ENCODE measurements at regions of chr12 and their contacts with region 1.

Region 1: GRCh38 chr12:105420659-105421240 is 90.3 kb downstream of the C12orf75 start:
- DNase-seq: peak; percentile 62 to 79
- ATAC-seq: peak; percentile 76 to 88
- H3K4me3 ChIP-seq: no peak overlapping the region
- H3K27ac ChIP-seq: peak overlapping the region in 1 of 2 experiments; percentile 63; a peak in 3 of 6 replicates
- H3K4me1 ChIP-seq: peaks cover 12% of the 10 kb centered on the region; the same call in 1 of the 3 replicates
- CTCF ChIP-seq: peak; percentile 97
- EP300 ChIP-seq: no peak
- POLR2A ChIP-seq: no peak
- RAD21 ChIP-seq: peak; percentile 99 to 100

Region 2: GRCh38 chr12:105431537-105432100 is 10.9 kb after region 1 on chr12:
- CTCF ChIA-PET with region 1: interaction called, 36 read pairs
- POLR2A ChIA-PET with region 1: no interaction called
- DNase-seq: no peak
- ATAC-seq: no peak
- H3K4me3 ChIP-seq: no peak overlapping the region
- H3K27ac ChIP-seq: no peak overlapping the region
- H3K4me1 ChIP-seq: 0 out of 3 replicates have a peak, but pooled peaks cover 2% of the 10 kb centered on the region
- CTCF ChIP-seq: no peak
- EP300 ChIP-seq: no peak
- POLR2A ChIP-seq: no peak
- RAD21 ChIP-seq: no peak

Region 3: GRCh38 chr12:105510526-105510925 is 89.8 kb after region 1 on chr12:
- CTCF ChIA-PET with region 1: no interaction called
- POLR2A ChIA-PET with region 1: no interaction called
- DNase-seq: no peak
- ATAC-seq: no peak
- H3K4me3 ChIP-seq: no peak overlapping the region
- H3K27ac ChIP-seq: no peak overlapping the region
- H3K4me1 ChIP-seq: 0 out of 3 replicates have a peak, but pooled peaks cover 4% of the 10 kb centered on the region
- CTCF ChIP-seq: no peak
- EP300 ChIP-seq: no peak
- POLR2A ChIP-seq: no peak
- RAD21 ChIP-seq: no peak

Region 4: DNA sequence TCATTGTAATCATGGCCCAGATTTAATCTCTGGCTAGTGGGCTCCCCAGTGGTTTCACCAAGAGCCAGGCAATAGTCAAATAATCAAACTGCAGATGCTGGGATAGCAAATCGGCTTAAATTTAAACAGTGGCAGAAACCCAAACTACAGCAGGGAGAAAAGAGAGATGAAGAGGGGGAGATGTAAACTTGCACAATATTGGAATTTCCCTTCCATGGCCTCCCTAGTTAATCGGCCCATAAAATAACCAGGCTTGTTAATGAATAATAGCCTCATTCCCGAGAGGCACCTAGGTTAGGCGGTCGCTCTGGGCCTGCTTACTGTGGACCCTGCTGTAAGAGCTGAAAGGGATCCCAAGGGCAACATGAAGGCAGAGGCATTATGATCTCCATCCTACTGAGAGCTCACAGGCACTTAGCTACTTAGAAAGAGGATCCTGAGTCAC is 601.8 kb after region 1 on chr12:
- CTCF ChIA-PET with region 1: interaction called, 15 read pairs
- POLR2A ChIA-PET with region 1: no interaction called
- DNase-seq: peak; percentile 26 to 62
- ATAC-seq: peak; percentile 67 to 85
- H3K4me3 ChIP-seq: no peak overlapping the region
- H3K27ac ChIP-seq: peak overlapping the region; percentile 65 to 73
- H3K4me1 ChIP-seq: peaks cover 26% of the 10 kb centered on the region
- CTCF ChIP-seq: no peak
- EP300 ChIP-seq: no peak
- POLR2A ChIP-seq: no peak
- RAD21 ChIP-seq: peak in 1 of 2 experiments; percentile 26; a peak in 1 of 5 replicates

Region 5: GRCh38 chr12:106149096-106149784 is 728.5 kb after region 1 on chr12:
- CTCF ChIA-PET with region 1: interaction called, 75 read pairs
- POLR2A ChIA-PET with region 1: no interaction called
- DNase-seq: peak; percentile 45 to 58
- ATAC-seq: peak; percentile 81 to 87; a peak in 4 of 6 replicates
- H3K4me3 ChIP-seq: no peak overlapping the region
- H3K27ac ChIP-seq: no peak overlapping the region
- H3K4me1 ChIP-seq: peaks cover 13% of the 10 kb centered on the region; the same call in 1 of the 3 replicates
- CTCF ChIP-seq: peak; percentile 83
- EP300 ChIP-seq: no peak
- POLR2A ChIP-seq: no peak
- RAD21 ChIP-seq: peak; percentile 75 to 77

Region 6: GRCh38 chr12:106154751-106155273 is 734.1 kb after region 1 on chr12:
- CTCF ChIA-PET with region 1: interaction called, 75 read pairs
- POLR2A ChIA-PET with region 1: no interaction called
- DNase-seq: no peak
- ATAC-seq: no peak
- H3K4me3 ChIP-seq: no peak overlapping the region
- H3K27ac ChIP-seq: no peak overlapping the region
- H3K4me1 ChIP-seq: no peaks in the 10 kb centered on the region
- CTCF ChIP-seq: no peak
- EP300 ChIP-seq: no peak
- POLR2A ChIP-seq: no peak
- RAD21 ChIP-seq: no peak

Region 7: DNA sequence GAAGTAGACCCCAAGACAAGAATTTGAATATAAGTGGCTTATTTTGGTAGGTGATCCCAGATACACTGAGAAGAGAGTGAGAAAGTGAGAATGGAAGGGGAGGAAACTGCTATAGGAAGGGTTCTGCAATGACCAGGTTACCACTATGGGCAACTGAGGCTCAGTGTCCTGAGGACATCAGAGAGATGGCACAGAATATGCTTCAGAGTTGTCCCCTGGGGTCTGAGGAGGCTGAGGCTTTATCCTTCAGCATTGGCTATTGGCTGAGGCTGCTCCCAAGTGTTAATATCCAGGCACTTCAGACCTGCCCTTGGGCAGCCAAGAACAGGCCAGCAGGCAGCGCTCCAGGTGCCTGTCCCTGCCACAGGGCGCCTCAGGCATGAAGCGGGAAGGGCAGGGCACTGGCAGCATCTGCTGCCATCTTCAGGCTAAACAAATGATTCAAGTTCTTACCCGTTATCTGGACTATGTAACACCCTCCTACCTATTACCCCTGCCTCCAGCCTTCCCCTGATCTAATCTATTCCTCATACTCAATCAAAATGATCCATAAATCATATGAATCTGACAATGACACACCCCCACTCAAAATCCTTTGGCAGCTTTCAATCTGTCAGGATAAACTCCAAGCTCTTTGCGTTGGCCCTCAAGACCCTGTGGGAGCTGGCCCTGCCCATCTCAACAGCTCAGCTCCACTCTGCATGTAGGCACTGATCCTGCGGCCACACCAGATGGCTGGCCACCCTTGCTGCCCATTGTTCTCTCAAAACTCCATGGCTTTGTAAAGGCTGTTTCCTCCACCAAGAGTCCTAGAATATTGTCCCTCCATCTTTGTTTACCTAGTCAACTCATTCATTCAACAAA is 784.7 kb after region 1 on chr12:
- CTCF ChIA-PET with region 1: interaction called, 17 read pairs
- POLR2A ChIA-PET with region 1: no interaction called
- DNase-seq: peak in 1 of 2 experiments; percentile 61
- ATAC-seq: peak; percentile 92 to 98
- H3K4me3 ChIP-seq: no peak overlapping the region
- H3K27ac ChIP-seq: no peak overlapping the region
- H3K4me1 ChIP-seq: no peaks in the 10 kb centered on the region
- CTCF ChIP-seq: peak; percentile 36; the same call in 2 of the 3 replicates
- EP300 ChIP-seq: no peak
- POLR2A ChIP-seq: no peak
- RAD21 ChIP-seq: peak; percentile 58 to 73

Measured in A549 (cell line).